Cardiac septum (tissue), 1 donor: ENCODE measurements at regions of chr17 and their contacts with region 1.

Region 1: DNA sequence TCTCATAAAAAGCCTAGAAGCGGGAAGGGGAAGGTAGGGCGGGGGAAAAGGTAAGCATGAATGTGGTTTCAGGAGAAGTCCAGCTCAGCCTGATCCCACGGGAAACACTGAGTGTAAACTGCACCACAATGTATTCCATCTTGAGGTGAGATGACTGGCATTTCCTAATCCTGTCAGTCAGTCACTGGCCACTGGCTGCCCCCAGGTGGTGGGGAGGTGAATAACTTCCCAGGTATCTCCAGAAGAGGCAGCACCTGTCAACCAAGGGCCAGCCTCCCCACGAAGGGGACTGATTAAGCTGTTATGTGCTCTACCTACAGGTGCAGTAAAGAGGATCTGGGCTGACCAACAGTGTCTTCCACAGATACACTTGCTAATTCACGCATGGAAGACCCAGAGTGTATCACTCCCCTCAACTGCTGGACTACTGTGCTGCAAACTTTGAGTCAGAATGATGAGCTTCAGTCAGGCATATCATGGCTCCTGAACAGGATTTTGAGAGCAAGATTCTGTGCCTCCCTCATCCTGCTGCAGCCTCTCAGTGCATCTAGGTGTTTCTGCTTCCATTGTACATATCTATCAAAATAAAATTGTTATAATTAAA is 108.5 kb upstream of the CCL2 start:
- DNase-seq: no peak

Region 2: GRCh38 chr17:33642002-33642401 is 504.5 kb before region 1 on chr17:
- intact Hi-C with region 1: no loop called
- DNase-seq: no peak

Region 3: GRCh38 chr17:33779225-33779591 is 367.3 kb before region 1 on chr17:
- intact Hi-C with region 1: loop called (anchors 5 kb)
- DNase-seq: no peak

Region 4: GRCh38 chr17:33927732-33928133 is 218.8 kb before region 1 on chr17:
- intact Hi-C with region 1: loop called (anchors 5 kb)
- DNase-seq: no peak

Region 5: GRCh38 chr17:34012709-34013375 is 133.7 kb before region 1 on chr17:
- intact Hi-C with region 1: no loop called
- DNase-seq: no peak